ENCODE measurements at regions of chr1 and their contacts with region 1.

Region 1: GRCh38 chr1:29181413-29182225 is at the start of gene SRSF4:
- DNase-seq: peak; percentile 98
- H3K4me3 ChIP-seq: peak within 1 kb of the TSS; percentile 80 to 99
- H3K27ac ChIP-seq: peak within 1 kb of the TSS; percentile 99
- H3K4me1 ChIP-seq: peaks cover 51% of the 10 kb centered on the region
- H3K27me3 ChIP-seq: no peaks in the 10 kb centered on the region
- CTCF ChIP-seq: peak; percentile 45 to 54 (median 52)
- POLR2A ChIP-seq: peak in 1 of 2 donors; percentile 94
- total RNA-seq, gene SRSF4: 67.8 TPM

Region 2: GRCh38 chr1:28510665-28511440 is 670.8 kb before region 1 on chr1:
- intact Hi-C with region 1: loop called (anchors 5 kb)
- DNase-seq: no peak
- H3K4me3 ChIP-seq: peak overlapping the region in 1 of 2 donors; percentile 1
- H3K27ac ChIP-seq: no peak overlapping the region
- H3K4me1 ChIP-seq: peaks cover 60% of the 10 kb centered on the region
- H3K27me3 ChIP-seq: no peaks in the 10 kb centered on the region
- CTCF ChIP-seq: no peak
- POLR2A ChIP-seq: no peak

Region 3: DNA sequence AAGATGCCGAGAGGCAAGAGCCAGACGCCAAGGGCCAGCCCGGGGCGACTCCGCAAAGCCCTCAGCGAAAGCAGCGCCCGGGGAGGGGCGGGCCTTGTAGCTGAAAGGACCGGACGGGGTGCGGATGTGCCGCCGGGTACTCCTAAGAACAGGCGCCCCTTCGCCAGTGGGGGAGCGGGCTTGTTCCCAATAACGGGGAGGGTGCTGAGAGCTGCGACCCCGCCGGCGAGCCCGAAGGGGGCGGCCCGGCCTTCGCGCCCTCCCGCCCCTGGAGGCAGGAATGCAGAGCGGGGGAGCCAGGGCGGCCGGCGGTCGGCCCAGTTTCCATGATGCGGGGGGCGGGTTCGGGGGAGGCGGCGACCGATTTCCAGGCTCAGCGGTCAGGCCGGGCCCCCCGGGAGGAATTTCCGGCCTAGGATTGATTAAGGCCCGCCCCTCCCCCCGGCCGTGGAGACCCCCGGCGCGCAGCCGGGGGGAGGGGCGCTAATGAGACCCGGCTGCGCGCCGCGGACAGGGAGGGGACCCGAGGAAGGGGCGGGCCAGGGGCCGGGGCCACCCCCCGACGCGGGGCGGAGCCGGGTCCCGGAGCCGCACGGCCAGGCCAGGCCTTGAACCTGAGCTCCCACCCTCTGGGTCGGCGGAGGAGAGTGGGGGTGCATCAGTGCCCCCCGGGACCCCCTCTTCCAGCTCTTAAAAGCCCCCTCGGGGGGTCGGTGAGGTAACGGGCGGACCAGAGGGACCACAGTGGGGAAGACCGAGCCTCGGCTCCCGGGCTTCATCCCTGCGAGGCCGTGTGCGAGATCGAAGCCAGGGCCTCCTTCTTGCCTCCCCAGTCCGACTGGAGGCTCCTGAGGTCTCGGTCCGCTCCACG is 57.0 kb before region 1 on chr1:
- intact Hi-C with region 1: loop called (anchors 2 kb)
- DNase-seq: peak in 1 of 2 donors; percentile 93
- H3K4me3 ChIP-seq: peak overlapping the region; percentile 67 to 75
- H3K27ac ChIP-seq: peak overlapping the region; percentile 94
- H3K4me1 ChIP-seq: peaks cover 56% of the 10 kb centered on the region
- H3K27me3 ChIP-seq: no peaks in the 10 kb centered on the region
- CTCF ChIP-seq: peak; percentile 43 to 99 (median 59)
- POLR2A ChIP-seq: peak; percentile 72 to 83

Measured in vagina (tissue), 2 donors.